ENCODE measurements at regions of chr21 and their contacts with region 1.

Region 1: GRCh38 chr21:38805328-38806152 is at the start of gene ETS2:
- DNase-seq: peak; percentile 87
- ATAC-seq: peak; percentile 84
- H3K4me3 ChIP-seq: peak within 1 kb of the TSS; percentile 81
- H3K27ac ChIP-seq: peak within 1 kb of the TSS; percentile 80
- H3K4me1 ChIP-seq: peaks cover 13 to 37% of the 10 kb centered on the region in 2 experiments; a peak in 3 of 4 replicates
- H3K27me3 ChIP-seq: no peaks in the 10 kb centered on the region
- CTCF ChIP-seq: no peak
- POLR2A ChIP-seq: peak; percentile 83
- RAD21 ChIP-seq: no peak
- total RNA-seq, gene ETS2: 32.9 TPM

Region 2: DNA sequence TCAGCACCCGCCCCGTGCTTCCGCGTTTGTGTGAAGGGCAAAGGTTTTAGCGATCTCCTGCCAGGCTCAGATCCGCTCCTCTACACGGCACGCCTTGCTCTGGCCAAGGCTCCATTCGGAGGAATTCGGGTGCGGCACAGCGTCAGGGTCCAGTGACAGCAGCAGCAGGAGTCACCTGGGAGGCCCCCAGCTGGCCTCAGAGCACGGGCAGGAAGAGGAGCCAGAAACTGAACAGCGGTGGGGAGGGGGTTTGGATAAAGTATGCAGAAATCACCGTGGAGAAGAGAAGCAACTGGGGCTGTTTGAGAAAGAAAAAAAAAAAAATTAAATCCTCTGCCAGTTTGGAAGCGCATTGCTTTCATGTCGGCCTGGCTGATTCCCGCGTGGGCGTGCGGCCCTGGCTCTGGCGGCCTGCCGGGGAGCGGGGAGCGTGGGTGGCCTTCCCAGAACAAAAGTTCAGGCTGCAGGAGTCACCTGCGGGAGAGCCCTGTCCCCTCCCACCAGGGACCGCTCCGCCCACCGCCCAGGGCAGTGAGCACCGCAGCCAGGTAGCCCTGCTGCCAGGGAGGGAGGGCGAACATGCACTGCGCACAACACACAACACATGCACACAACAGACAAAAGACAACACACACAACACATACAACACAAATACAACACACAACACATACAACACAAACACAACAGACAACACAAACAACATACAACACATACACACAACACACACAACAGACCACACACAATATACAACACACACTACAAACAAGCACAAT is 107.8 kb after region 1 on chr21:
- CTCF ChIA-PET with region 1: no interaction called
- POLR2A ChIA-PET with region 1: no interaction called
- RAD21 ChIA-PET with region 1: no interaction called
- intact Hi-C with region 1: loop called (anchors 1 kb)
- DNase-seq: peak; percentile 77
- ATAC-seq: peak; percentile 85
- H3K4me3 ChIP-seq: peak overlapping the region; percentile 30 to 52
- H3K27ac ChIP-seq: peak overlapping the region; percentile 49
- H3K4me1 ChIP-seq: peaks cover 50 to 54% of the 10 kb centered on the region in 2 experiments
- H3K27me3 ChIP-seq: no peaks in the 10 kb centered on the region
- CTCF ChIP-seq: no peak
- POLR2A ChIP-seq: no peak
- RAD21 ChIP-seq: no peak

Region 3: GRCh38 chr21:39022863-39023693 is 217.5 kb after region 1 on chr21:
- CTCF ChIA-PET with region 1: no interaction called
- POLR2A ChIA-PET with region 1: no interaction called
- RAD21 ChIA-PET with region 1: no interaction called
- intact Hi-C with region 1: loop called (anchors 5 kb)
- DNase-seq: no peak
- ATAC-seq: peak; percentile 64
- H3K4me3 ChIP-seq: no peak overlapping the region
- H3K27ac ChIP-seq: no peak overlapping the region
- H3K4me1 ChIP-seq: peaks cover 0 to 12% of the 10 kb centered on the region in 2 experiments; a peak in 1 of 4 replicates
- H3K27me3 ChIP-seq: no peaks in the 10 kb centered on the region
- CTCF ChIP-seq: peak; percentile 12 to 43 (median 32); a peak in 4 of 6 replicates
- POLR2A ChIP-seq: no peak
- RAD21 ChIP-seq: peak; percentile 42; the same call in 1 of the 2 replicates

Region 4: DNA sequence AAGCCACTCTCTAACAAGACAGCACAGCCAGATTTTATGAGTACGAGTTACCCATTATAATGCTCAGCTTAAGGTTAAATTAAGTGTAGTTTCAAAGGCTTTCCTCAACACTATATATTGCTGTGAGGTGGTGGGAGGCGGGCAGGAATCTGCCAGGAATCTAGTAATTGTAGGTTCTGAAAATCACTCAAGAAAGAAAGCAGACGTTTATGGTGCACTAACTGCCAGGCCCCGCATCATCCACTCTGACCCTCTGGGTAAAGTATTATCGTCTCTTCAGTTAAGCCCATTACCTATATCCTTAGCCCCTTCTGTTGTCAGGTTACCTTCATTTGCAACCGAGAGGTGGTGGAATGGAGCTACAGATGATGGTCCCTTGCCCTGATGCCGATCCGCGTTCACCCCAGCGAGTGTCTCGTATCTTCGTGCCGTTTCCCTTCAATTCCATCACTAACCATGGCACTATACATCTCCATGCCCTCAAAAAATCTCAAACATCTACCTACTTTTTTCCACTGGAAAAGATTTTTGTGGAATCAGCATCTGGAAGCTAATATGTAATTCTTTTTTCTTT is 531.0 kb after region 1 on chr21:
- CTCF ChIA-PET with region 1: no interaction called
- POLR2A ChIA-PET with region 1: no interaction called
- RAD21 ChIA-PET with region 1: no interaction called
- intact Hi-C with region 1: no loop called
- DNase-seq: no peak
- ATAC-seq: no peak
- H3K4me3 ChIP-seq: no peak overlapping the region
- H3K27ac ChIP-seq: no peak overlapping the region
- H3K4me1 ChIP-seq: no peaks in the 10 kb centered on the region
- H3K27me3 ChIP-seq: no peaks in the 10 kb centered on the region
- CTCF ChIP-seq: no peak
- POLR2A ChIP-seq: no peak
- RAD21 ChIP-seq: no peak

Measured in HCT116 (cell line).